ENCODE measurements at regions of chr17 and their contacts with region 1.

Region 1: GRCh38 chr17:8997994-8998628 is 23.2 kb upstream of the NTN1 start:
- DNase-seq: peak; percentile 70 to 82 (median 77)
- H3K4me3 ChIP-seq: no peak overlapping the region
- H3K27ac ChIP-seq: no peak overlapping the region
- H3K4me1 ChIP-seq: peaks cover 0 to 15% (median 11%) of the 10 kb centered on the region in 4 experiments
- H3K27me3 ChIP-seq: peaks cover 0 to 35% (median 9%) of the 10 kb centered on the region in 5 experiments

Region 2: GRCh38 chr17:8880476-8881036 is 117.6 kb before region 1 on chr17:
- CTCF ChIA-PET with region 1: no interaction called
- POLR2A ChIA-PET with region 1: no interaction called
- DNase-seq: no peak
- H3K4me3 ChIP-seq: no peak overlapping the region
- H3K27ac ChIP-seq: no peak overlapping the region
- H3K4me1 ChIP-seq: peaks cover 0 to 12% (median 6%) of the 10 kb centered on the region in 4 experiments
- H3K27me3 ChIP-seq: no peaks in the 10 kb centered on the region

Region 3: DNA sequence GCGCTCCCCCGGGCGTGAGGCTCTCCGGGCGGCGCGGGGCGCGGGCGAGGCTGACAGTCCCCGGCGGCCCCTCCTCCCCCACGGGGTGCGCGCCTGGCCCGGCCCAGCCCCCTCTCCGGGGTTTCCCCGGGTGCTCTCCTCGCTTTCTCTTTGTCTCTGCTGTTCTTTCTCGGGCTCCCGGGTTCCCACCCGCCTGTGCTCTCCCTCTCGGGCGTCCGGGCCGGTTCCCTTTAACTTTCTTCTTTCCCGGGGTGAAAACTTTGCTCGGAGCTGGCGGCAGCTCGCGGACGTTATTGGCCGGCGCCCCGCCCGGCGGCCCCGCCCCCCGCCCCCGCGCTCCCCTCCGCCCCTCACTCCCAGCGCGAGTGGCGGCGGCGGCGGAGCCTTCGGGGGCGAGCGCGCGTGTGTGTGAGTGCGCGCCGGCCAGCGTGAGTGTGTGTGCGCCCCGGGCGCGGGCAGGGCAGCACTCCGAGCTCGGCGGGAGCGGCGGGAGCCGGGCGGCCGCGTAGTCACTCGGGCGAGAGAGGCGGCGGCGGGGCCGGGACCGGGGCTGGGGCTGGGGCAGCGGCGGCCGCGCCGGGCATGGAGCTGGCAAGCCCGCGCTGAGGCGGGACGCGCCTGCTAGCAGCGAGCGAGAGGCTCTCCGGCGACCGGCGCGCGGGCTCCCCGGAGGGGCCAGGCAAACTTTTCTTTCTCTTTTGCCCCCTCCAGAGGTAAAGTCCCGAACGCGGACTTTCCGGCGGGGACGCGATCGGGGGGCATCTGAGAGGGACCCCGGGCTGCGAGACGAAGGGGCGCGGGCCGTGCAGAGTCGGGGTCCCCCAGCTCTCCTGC is 23.3 kb after region 1 on chr17 and contains the start of gene NTN1:
- CTCF ChIA-PET with region 1: interaction called, 17 read pairs
- POLR2A ChIA-PET with region 1: no interaction called
- DNase-seq: peak in 2 of 3 donors; percentile 73 to 79
- H3K4me3 ChIP-seq: peak within 1 kb of the TSS; percentile 53 to 80 (median 66)
- H3K27ac ChIP-seq: no peak within 1 kb of the TSS
- H3K4me1 ChIP-seq: peaks cover 0 to 40% (median 38%) of the 10 kb centered on the region in 4 experiments
- H3K27me3 ChIP-seq: peaks cover 10 to 82% (median 37%) of the 10 kb centered on the region in 5 experiments

Region 4: GRCh38 chr17:9037736-9038135 is 39.6 kb after region 1 on chr17:
- CTCF ChIA-PET with region 1: no interaction called
- POLR2A ChIA-PET with region 1: no interaction called
- DNase-seq: peak in 2 of 3 donors; percentile 50 to 68
- H3K4me3 ChIP-seq: peak overlapping the region in 1 of 7 experiments; percentile 0
- H3K27ac ChIP-seq: peak overlapping the region; percentile 6 to 35
- H3K4me1 ChIP-seq: peaks cover 0 to 24% (median 8%) of the 10 kb centered on the region in 4 experiments
- H3K27me3 ChIP-seq: no peaks in the 10 kb centered on the region

Region 5: GRCh38 chr17:9522074-9522473 is 524.0 kb after region 1 on chr17:
- CTCF ChIA-PET with region 1: interaction called, 17 read pairs
- POLR2A ChIA-PET with region 1: no interaction called
- DNase-seq: peak; percentile 49 to 71 (median 64)
- H3K4me3 ChIP-seq: no peak overlapping the region
- H3K27ac ChIP-seq: no peak overlapping the region
- H3K4me1 ChIP-seq: peaks cover 0 to 3% (median 0%) of the 10 kb centered on the region in 4 experiments
- H3K27me3 ChIP-seq: no peaks in the 10 kb centered on the region

Measured in common myeloid progenitor, CD34-positive (primary cell).